Body of pancreas (tissue), 4 donors: ENCODE measurements at regions of chr18 and their contacts with region 1.

Region 1: GRCh38 chr18:44799907-44800421 is 119.3 kb downstream of the SETBP1 start:
- DNase-seq: peak in 2 of 4 donors; percentile 38 to 52
- ATAC-seq: peak; percentile 24
- H3K4me3 ChIP-seq: no peak overlapping the region
- H3K27ac ChIP-seq: peak overlapping the region; percentile 64 to 87 (median 79)
- H3K4me1 ChIP-seq: peaks cover 90% of the 10 kb centered on the region
- H3K27me3 ChIP-seq: no peaks in the 10 kb centered on the region
- CTCF ChIP-seq: no peak
- POLR2A ChIP-seq: no peak

Region 2: GRCh38 chr18:44680266-44681075 is 119.5 kb before region 1 on chr18 and contains the start of gene SETBP1:
- intact Hi-C with region 1: loop called (anchors 10 kb)
- DNase-seq: peak; percentile 79 to 86 (median 82)
- ATAC-seq: peak; percentile 51
- H3K4me3 ChIP-seq: peak within 1 kb of the TSS; percentile 77 to 92
- H3K27ac ChIP-seq: peak within 1 kb of the TSS; percentile 81 to 99 (median 96)
- H3K4me1 ChIP-seq: peaks cover 57% of the 10 kb centered on the region
- H3K27me3 ChIP-seq: no peaks in the 10 kb centered on the region
- CTCF ChIP-seq: peak in 4 of 7 experiments; percentile 20 to 27 (median 22)
- POLR2A ChIP-seq: peak; percentile 22 to 63 (median 59)
- total RNA-seq, gene SETBP1: 23.6 to 37.2 TPM

Region 3: GRCh38 chr18:44852818-44853217 is 52.9 kb after region 1 on chr18:
- intact Hi-C with region 1: loop called (anchors 10 kb)
- DNase-seq: peak in 2 of 4 donors; percentile 8 to 16
- ATAC-seq: peak; percentile 38
- H3K4me3 ChIP-seq: no peak overlapping the region
- H3K27ac ChIP-seq: peak overlapping the region in 2 of 4 donors; percentile 15 to 28
- H3K4me1 ChIP-seq: peaks cover 32% of the 10 kb centered on the region
- H3K27me3 ChIP-seq: no peaks in the 10 kb centered on the region
- CTCF ChIP-seq: no peak
- POLR2A ChIP-seq: no peak